Gastrocnemius medialis (tissue), 4 donors: ENCODE measurements at regions of chr11 and their contacts with region 1.

Region 1: GRCh38 chr11:17479284-17480214 is 2.9 kb upstream of the ABCC8 start:
- DNase-seq: no peak
- ATAC-seq: peak in 1 of 2 donors; percentile 78
- H3K4me3 ChIP-seq: peak overlapping the region in 1 of 4 donors; percentile 29
- H3K27ac ChIP-seq: no peak overlapping the region
- H3K4me1 ChIP-seq: peaks cover 0 to 9% of the 10 kb centered on the region in 2 donors
- H3K27me3 ChIP-seq: peaks cover 0 to 9% (median 0%) of the 10 kb centered on the region in 3 donors
- CTCF ChIP-seq: no peak
- POLR2A ChIP-seq: no peak

Region 2: DNA sequence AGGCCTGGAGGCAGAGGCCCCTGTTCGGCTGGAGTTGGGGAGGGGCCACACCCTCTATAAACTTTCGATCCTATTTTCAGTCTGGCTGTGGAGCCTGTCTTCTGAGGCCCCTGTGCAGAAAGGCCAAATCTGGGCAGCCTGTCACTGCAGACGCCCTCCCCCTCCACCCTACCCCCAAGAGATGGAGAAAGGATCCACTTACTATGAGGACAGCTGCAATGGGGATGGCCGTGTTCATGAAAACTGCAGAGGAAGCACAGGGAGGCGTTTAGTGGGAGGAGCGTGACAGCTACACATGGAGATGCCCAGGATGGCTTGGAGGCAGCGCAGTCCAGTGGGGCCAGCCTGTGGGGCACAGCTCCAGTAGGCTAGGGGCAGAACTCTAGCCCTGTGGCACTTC is 47.5 kb before region 1 on chr11:
- in situ Hi-C with region 1: no loop called
- intact Hi-C with region 1: loop called (anchors 5 kb)
- DNase-seq: peak in 1 of 2 donors; percentile 62
- ATAC-seq: peak; percentile 54 to 83
- H3K4me3 ChIP-seq: no peak overlapping the region
- H3K27ac ChIP-seq: peak overlapping the region; percentile 39 to 54 (median 44)
- H3K4me1 ChIP-seq: peaks cover 31 to 34% of the 10 kb centered on the region in 2 donors
- H3K27me3 ChIP-seq: no peaks in the 10 kb centered on the region
- CTCF ChIP-seq: no peak
- POLR2A ChIP-seq: no peak

Region 3: GRCh38 chr11:17531818-17532131 is 52.2 kb after region 1 on chr11:
- in situ Hi-C with region 1: no loop called
- intact Hi-C with region 1: no loop called
- DNase-seq: no peak
- ATAC-seq: no peak
- H3K4me3 ChIP-seq: no peak overlapping the region
- H3K27ac ChIP-seq: no peak overlapping the region
- H3K4me1 ChIP-seq: no peaks in the 10 kb centered on the region
- H3K27me3 ChIP-seq: peaks cover 0 to 2% (median 0%) of the 10 kb centered on the region in 3 donors
- CTCF ChIP-seq: no peak
- POLR2A ChIP-seq: no peak